ENCODE measurements at regions of chr4 and their contacts with region 1.

Region 1: GRCh38 chr4:26148927-26149326 is 171.9 kb upstream of the RBPJ start:
- DNase-seq: no peak
- ATAC-seq: no peak
- H3K4me3 ChIP-seq: no peak overlapping the region
- H3K27ac ChIP-seq: no peak overlapping the region
- H3K4me1 ChIP-seq: no peaks in the 10 kb centered on the region
- H3K27me3 ChIP-seq: no peaks in the 10 kb centered on the region
- CTCF ChIP-seq: no peak

Region 2: DNA sequence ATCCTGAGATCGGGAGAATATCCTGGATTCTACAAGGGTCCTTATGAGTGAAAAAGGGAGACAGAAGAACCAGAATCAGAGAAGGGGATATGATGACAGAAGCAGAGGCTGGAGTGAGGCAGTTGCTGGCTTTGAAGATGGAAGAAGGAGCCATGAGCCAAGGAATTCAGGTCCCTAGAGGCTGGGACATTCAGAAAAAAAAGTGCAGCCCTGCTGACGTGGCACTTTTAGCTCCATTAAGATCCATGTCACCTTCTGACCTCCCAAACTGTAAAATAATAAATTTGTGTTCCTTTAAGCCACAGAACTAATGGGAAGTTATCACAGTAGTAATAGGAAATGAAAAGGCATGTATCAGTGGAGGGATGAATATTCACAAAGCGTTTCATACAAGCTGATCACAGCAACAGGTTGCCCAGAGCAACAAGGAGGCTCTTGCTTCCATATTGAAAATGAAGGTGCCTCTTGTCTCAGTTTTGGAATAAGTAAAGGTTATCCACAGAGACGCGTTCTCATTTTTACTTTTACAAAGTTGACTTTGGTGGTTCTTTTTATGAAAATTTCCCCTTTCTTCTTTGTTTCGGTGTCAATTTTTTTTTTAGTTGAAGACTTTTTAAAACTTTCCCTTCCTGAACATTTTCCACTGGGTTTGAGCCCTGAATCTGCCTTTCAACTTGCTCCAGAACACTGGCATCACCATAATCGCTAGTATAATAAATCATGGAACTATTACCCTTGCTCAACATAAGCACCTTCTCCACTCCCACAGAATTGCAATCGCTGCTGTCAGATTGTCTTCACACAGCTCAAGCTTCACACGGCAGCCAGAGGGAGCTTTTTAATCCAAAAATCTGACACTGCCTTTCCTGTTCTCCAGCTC is 44.2 kb after region 1 on chr4:
- CTCF ChIA-PET with region 1: no interaction called
- POLR2A ChIA-PET with region 1: no interaction called
- in situ Hi-C with region 1: no loop called
- intact Hi-C with region 1: loop called (anchors 1 kb)
- DNase-seq: no peak
- ATAC-seq: no peak
- H3K4me3 ChIP-seq: no peak overlapping the region
- H3K27ac ChIP-seq: no peak overlapping the region
- H3K4me1 ChIP-seq: peaks cover 8% of the 10 kb centered on the region
- H3K27me3 ChIP-seq: no peaks in the 10 kb centered on the region
- CTCF ChIP-seq: 0 out of 2 replicates have a peak, but pooled peaks have one; percentile 3

Measured in Panc1 (cell line).